ENCODE measurements at regions of chr14 and their contacts with region 1.

Region 1: DNA sequence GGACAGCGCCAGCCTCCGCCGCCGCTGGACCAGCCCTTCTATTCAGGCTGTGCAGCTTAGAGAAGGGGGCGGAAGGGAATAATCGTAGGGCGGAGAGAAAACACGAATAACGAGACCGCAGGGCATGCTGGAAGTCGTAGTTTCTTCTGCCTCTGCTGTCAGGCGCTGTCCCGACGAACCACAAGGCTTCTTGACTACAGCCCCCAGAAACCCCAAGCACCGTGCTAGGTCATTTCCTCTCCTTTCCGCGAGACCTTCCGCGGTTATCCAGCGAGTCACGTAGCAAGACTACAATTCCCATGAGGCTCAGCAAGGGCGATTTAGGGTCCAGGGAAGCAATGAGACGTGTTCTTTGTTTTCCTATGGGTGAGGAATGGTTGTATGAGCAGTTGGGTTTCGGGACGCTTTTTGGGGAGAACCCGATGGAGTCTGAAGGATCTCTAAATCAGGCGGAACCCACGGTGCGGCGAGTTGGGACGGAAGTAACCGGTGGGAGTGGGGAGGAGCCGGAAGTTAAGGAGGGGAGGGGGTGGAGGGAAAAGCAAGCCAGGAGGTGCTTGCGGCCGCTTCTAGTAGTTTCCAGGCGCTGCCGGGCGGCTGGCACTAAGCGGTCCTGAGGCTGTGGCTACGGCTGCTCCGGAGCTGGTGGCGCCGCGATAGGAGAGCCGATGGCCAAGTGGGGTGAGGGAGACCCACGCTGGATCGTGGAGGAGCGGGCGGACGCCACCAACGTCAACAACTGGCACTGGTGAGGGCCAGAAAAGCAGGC is at the starts of genes AHSA1 and VIPAS39:
- DNase-seq: peak; percentile 94 to 98
- H3K4me3 ChIP-seq: peak within 1 kb of the TSS; percentile 71 to 92
- H3K27ac ChIP-seq: peak within 1 kb of the TSS; percentile 86 to 90
- H3K4me1 ChIP-seq: peaks cover 5 to 23% of the 10 kb centered on the region in 2 donors
- H3K27me3 ChIP-seq: no peaks in the 10 kb centered on the region
- CTCF ChIP-seq: no peak
- total RNA-seq, gene AHSA1: 123 TPM
- total RNA-seq, gene VIPAS39: 2.8 TPM

Region 2: DNA sequence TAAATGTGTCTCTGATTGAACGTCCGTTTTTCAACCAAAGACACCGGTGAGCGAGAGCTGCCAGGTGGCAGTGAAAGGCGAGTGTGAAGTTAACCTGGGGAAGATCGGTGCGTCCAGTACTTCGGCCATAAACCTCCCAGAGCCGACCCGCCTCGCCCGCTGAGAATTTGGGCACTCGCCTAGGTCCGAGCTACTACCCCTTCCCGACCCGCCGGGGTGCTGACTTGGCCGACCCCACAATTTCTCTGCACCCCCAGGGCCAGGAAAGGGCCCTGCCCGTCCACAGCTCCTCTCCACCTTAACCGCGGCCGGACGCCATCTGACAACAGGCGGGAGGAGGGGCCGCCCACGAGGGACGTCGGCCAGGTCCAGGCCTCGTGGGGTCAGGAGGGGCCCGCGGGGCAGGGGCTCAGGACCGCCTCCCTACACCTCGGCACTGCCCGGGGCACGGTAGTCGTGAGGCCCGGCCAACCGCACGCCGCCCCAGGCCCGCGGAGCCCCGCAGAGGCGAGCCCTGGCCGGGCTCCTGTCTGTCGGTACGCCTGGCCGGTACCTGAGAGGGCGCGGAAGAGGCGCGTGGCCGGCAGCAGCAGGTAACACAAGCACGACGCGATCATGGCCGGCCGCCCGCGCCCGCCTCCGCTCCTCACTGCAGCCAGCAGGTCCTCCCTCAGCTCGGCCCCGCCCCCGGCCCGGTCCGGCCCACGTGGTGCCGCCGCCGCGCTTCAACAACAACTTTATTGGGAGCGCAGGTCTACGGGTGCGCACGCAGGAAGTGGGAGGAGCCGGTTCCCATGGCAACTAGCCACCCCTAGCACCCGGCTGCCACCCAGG is 645.3 kb before region 1 on chr14 and contains the start of gene ANGEL1:
- intact Hi-C with region 1: loop called (anchors 5 kb)
- DNase-seq: peak; percentile 86 to 98
- H3K4me3 ChIP-seq: peak within 1 kb of the TSS; percentile 76 to 88
- H3K27ac ChIP-seq: peak within 1 kb of the TSS; percentile 74 to 79
- H3K4me1 ChIP-seq: peaks cover 0 to 6% of the 10 kb centered on the region in 2 donors
- H3K27me3 ChIP-seq: no peaks in the 10 kb centered on the region
- CTCF ChIP-seq: no peak
- total RNA-seq, gene ANGEL1: 15.5 TPM

Region 3: DNA sequence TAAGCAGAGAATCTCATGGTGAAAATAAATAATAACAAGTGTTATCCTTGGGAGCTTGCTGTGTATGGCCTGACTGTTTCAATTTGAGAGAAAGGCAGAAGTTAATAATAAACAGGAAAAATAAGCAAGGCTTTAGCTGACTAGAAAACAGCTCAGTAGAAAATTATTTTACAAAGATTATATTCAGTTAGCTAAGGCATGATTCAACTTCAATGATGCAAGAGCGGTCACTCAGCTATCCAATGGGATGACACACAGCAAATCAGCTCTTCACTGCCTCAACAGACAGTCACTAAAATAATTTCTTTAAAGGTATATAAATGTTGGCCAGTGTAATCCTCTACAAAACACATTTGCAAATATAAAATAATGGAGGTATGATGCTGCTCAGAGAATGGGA is 118.3 kb before region 1 on chr14:
- intact Hi-C with region 1: no loop called
- DNase-seq: no peak
- H3K4me3 ChIP-seq: no peak overlapping the region
- H3K27ac ChIP-seq: no peak overlapping the region
- H3K4me1 ChIP-seq: no peaks in the 10 kb centered on the region
- H3K27me3 ChIP-seq: no peaks in the 10 kb centered on the region
- CTCF ChIP-seq: no peak

Region 4: DNA sequence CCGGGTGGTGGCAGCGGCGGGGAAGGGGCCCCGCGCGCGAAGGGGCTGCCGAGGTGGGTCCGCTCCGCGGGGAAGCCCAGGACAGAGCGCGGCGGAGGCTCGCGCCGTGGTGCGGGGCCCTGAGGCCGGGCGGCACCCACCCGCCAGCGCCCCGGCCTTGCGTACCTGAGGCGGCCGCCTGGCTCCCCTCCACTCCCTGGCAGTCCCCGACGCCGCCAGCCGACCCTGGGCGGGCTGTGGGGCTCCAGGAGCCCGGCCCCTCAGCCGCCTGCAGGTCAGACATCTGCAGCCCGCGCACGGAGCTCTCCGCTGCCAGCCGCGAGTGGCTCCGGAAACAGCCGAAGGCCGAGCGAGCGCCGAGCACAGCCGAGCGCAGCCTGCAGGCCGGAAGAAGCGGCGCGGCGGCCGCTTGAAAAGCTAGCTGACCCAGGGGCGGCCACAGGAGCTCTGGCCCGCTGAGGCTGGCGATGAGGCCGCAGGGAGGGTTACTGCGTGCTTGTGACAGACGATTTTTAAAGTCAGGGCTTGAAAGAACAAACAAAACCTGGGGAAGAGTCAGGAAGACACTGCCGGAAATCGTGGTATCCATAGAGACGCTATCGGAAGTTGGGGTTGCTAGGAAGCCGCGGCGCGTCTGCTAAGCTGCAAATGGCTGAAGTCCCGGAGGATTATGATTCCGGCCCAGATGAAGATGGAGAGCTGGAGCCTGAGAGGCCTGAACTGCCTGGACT is 80.8 kb before region 1 on chr14 and contains the starts of genes SAMD15 and TMED8:
- intact Hi-C with region 1: loop called (anchors 1 kb)
- DNase-seq: peak; percentile 25 to 86
- H3K4me3 ChIP-seq: peak within 1 kb of the TSS; percentile 94 to 97
- H3K27ac ChIP-seq: peak within 1 kb of the TSS; percentile 71 to 79
- H3K4me1 ChIP-seq: peaks cover 3 to 12% of the 10 kb centered on the region in 2 donors
- H3K27me3 ChIP-seq: no peaks in the 10 kb centered on the region
- CTCF ChIP-seq: peak in 2 of 3 experiments; percentile 32 to 39
- total RNA-seq, gene SAMD15: not detected
- total RNA-seq, gene TMED8: 3.7 TPM

Region 5: GRCh38 chr14:77400219-77400618 is 57.5 kb before region 1 on chr14:
- intact Hi-C with region 1: no loop called
- DNase-seq: no peak
- H3K4me3 ChIP-seq: no peak overlapping the region
- H3K27ac ChIP-seq: no peak overlapping the region
- H3K4me1 ChIP-seq: no peaks in the 10 kb centered on the region
- H3K27me3 ChIP-seq: no peaks in the 10 kb centered on the region
- CTCF ChIP-seq: no peak

Region 6: DNA sequence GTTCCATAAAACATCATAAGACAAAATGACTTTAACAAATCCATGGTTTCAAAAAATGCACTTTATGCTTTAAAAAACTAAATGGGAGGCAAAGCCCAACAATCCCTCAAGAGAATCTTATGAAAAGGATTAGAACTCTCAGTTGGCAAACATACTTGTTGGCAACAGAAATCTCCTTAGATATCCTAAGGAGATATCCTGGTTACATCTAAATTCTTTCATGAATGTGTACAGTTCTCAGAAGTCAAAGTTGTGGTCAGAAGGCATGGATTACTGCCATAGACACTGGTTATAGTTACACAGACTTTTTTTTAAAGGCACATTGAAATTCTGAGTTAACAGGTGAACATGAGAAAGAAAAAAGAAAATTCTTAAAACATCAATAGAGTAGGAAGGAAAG is 58.4 kb after region 1 on chr14:
- intact Hi-C with region 1: no loop called
- DNase-seq: no peak
- H3K4me3 ChIP-seq: no peak overlapping the region
- H3K27ac ChIP-seq: no peak overlapping the region
- H3K4me1 ChIP-seq: no peaks in the 10 kb centered on the region
- H3K27me3 ChIP-seq: no peaks in the 10 kb centered on the region
- CTCF ChIP-seq: no peak

Region 7: DNA sequence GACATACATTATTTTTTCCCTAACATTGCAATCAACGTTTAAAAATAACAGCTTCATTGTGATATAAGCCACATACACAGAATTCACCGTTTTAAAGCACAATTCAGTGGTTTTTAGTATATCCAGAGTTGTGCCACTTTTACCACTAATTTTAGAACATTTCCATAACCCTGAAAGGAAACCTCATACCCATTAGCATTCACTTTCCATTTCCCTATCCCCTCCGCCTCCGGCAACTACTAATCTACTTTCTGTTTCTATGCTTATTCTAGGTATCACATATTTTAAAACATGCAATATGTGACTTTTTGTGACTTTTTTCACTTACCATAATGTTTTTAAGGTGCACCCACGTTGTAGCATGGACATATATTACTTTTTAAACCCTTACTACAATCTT is 96.5 kb after region 1 on chr14:
- intact Hi-C with region 1: loop called (anchors 5 kb)
- DNase-seq: no peak
- H3K4me3 ChIP-seq: no peak overlapping the region
- H3K27ac ChIP-seq: no peak overlapping the region
- H3K4me1 ChIP-seq: no peaks in the 10 kb centered on the region
- H3K27me3 ChIP-seq: no peaks in the 10 kb centered on the region
- CTCF ChIP-seq: no peak

Region 8: DNA sequence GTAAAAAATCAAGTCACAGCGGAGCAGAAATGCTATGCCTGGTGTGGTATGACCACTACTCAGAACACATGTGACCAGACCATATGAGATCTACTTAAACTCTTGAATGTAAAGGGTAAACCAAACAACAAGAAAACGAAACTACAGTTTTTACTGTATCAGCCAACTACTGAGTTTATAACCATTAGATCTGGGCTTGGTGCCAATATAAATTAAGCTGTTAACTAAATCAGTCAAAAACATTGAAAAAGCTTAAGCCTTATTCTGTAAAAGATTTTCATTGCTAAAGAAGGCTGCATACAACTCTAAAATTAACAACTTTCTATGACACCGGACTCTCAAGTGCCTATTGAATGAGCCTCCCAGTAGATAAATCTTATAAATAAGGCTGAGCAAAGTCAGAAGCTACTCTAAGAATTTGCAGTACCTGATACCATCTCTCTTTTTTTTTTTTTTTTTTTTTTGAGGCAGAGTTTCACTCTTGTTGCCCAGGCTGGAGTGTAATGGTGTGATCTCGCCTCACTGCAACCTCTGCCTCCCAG is 123.3 kb after region 1 on chr14:
- intact Hi-C with region 1: no loop called
- DNase-seq: no peak
- H3K4me3 ChIP-seq: peak overlapping the region in 1 of 2 donors; percentile 5
- H3K27ac ChIP-seq: peak overlapping the region; percentile 1 to 35
- H3K4me1 ChIP-seq: peaks cover 0 to 24% of the 10 kb centered on the region in 2 donors
- H3K27me3 ChIP-seq: no peaks in the 10 kb centered on the region
- CTCF ChIP-seq: no peak

Region 9: GRCh38 chr14:77616454-77617229 is 158.9 kb after region 1 on chr14 and contains the start of gene SPTLC2:
- intact Hi-C with region 1: loop called (anchors 2 kb)
- DNase-seq: peak; percentile 98 to 100
- H3K4me3 ChIP-seq: peak within 1 kb of the TSS; percentile 84 to 91
- H3K27ac ChIP-seq: peak within 1 kb of the TSS; percentile 71 to 76
- H3K4me1 ChIP-seq: peaks cover 5 to 6% of the 10 kb centered on the region in 2 donors
- H3K27me3 ChIP-seq: no peaks in the 10 kb centered on the region
- CTCF ChIP-seq: no peak
- total RNA-seq, gene SPTLC2: 25.7 TPM

Region 10: GRCh38 chr14:77707724-77708408 is 250.2 kb after region 1 on chr14 and contains the starts of genes ALKBH1 and SLIRP:
- intact Hi-C with region 1: loop called (anchors 1 kb)
- DNase-seq: peak; percentile 52 to 93
- H3K4me3 ChIP-seq: peak within 1 kb of the TSS; percentile 66 to 88
- H3K27ac ChIP-seq: peak within 1 kb of the TSS; percentile 13 to 45
- H3K4me1 ChIP-seq: peaks cover 12 to 20% of the 10 kb centered on the region in 2 donors
- H3K27me3 ChIP-seq: no peaks in the 10 kb centered on the region
- CTCF ChIP-seq: no peak
- total RNA-seq, gene ALKBH1: 14.5 TPM
- total RNA-seq, gene SLIRP: 3.1 TPM

Region 11: GRCh38 chr14:77799863-77800730 is 342.4 kb after region 1 on chr14 and contains the start of gene ADCK1:
- intact Hi-C with region 1: loop called (anchors 2 kb)
- DNase-seq: peak; percentile 74 to 95
- H3K4me3 ChIP-seq: peak within 1 kb of the TSS; percentile 91 to 98
- H3K27ac ChIP-seq: peak within 1 kb of the TSS; percentile 87 to 94
- H3K4me1 ChIP-seq: peaks cover 0 to 3% of the 10 kb centered on the region in 2 donors
- H3K27me3 ChIP-seq: no peaks in the 10 kb centered on the region
- CTCF ChIP-seq: peak; percentile 36 to 52 (median 37)
- total RNA-seq, gene ADCK1: 0.43 TPM